ENCODE measurements at regions of chr1 and their contacts with region 1.

Region 1: GRCh38 chr1:155084722-155085503 is 6.3 kb downstream of the EFNA3 start:
- DNase-seq: peak; percentile 94
- H3K4me3 Mint-ChIP-seq: peak overlapping the region; percentile 92
- H3K27ac Mint-ChIP-seq: peak overlapping the region; percentile 84
- H3K4me1 Mint-ChIP-seq: peaks cover 35% of the 10 kb centered on the region
- H3K27me3 Mint-ChIP-seq: peaks cover 31% of the 10 kb centered on the region

Region 2: GRCh38 chr1:154936555-154937084 is 148.3 kb before region 1 on chr1 and contains the start of gene PMVK:
- CTCF ChIA-PET with region 1: interaction called, 16 read pairs
- POLR2A ChIA-PET with region 1: interaction called, 3 read pairs
- intact Hi-C with region 1: no loop called
- DNase-seq: peak; percentile 96
- H3K4me3 Mint-ChIP-seq: peak within 1 kb of the TSS; percentile 90
- H3K27ac Mint-ChIP-seq: peak within 1 kb of the TSS; percentile 96
- H3K4me1 Mint-ChIP-seq: peaks cover 55% of the 10 kb centered on the region
- H3K27me3 Mint-ChIP-seq: no peaks in the 10 kb centered on the region
- total RNA-seq, gene PMVK: 51.2 to 54.0 TPM

Region 3: GRCh38 chr1:154974063-154974807 is 110.7 kb before region 1 on chr1 and contains the start of gene CKS1B:
- CTCF ChIA-PET with region 1: interaction called, 3 read pairs
- POLR2A ChIA-PET with region 1: no interaction called
- intact Hi-C with region 1: loop called (anchors 2 kb)
- DNase-seq: peak; percentile 98
- H3K4me3 Mint-ChIP-seq: no peak within 1 kb of the TSS
- H3K27ac Mint-ChIP-seq: no peak within 1 kb of the TSS
- H3K4me1 Mint-ChIP-seq: peaks cover 30% of the 10 kb centered on the region
- H3K27me3 Mint-ChIP-seq: no peaks in the 10 kb centered on the region
- total RNA-seq, gene CKS1B: 197 to 205 TPM

Region 4: DNA sequence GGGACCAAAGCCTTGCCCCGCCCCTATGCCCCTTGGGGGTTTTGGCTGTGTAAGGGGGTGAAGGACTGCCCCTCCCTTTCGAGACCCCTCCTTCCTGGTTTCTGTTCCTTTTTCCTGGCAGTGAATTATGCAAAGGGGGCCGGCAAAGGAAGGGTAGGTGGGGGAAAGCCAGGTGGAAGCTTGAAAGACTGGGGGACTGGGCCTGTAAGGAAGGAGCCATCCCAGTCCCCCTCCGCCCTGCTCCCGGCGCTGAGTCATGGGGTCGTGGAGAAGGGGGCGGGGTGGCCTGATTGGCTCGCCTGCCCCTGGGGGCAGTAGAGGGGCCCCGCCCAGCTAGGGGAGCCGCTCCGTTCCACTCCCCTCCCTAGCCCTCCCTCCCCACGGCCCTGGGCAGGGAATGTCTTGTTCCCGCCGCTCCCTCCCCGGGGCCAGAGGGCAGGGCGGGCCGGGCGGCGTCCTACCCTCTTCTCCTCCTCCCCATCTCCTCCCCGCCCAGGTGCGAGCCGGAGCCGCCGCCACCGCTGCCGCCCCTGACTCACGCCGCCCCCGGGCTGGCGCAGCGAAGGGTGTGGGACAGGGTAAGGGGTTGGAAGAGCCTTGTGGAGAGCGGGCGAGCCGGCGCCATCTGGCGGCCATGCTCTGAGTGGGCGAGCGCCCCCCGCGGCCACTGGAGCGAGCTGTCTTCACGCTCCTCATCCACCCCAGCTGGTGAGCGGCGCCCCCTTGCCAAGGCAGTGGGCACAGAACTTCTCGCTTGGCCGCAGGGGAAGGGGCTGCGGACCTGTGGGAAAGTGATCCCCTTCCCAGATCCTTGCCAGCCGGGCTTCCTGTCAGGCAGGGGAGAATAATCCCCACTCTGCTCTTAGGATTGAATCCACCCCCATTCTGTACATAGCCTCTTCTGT is 67.6 kb before region 1 on chr1:
- CTCF ChIA-PET with region 1: interaction called, 20 read pairs
- POLR2A ChIA-PET with region 1: no interaction called
- intact Hi-C with region 1: no loop called
- DNase-seq: peak; percentile 97
- H3K4me3 Mint-ChIP-seq: peak overlapping the region; percentile 37
- H3K27ac Mint-ChIP-seq: peak overlapping the region; percentile 78
- H3K4me1 Mint-ChIP-seq: peaks cover 63% of the 10 kb centered on the region
- H3K27me3 Mint-ChIP-seq: no peaks in the 10 kb centered on the region

Region 5: GRCh38 chr1:155063550-155064110 is 21.3 kb before region 1 on chr1 and contains the start of gene EFNA4:
- CTCF ChIA-PET with region 1: interaction called, 125 read pairs
- POLR2A ChIA-PET with region 1: interaction called, 21 read pairs
- intact Hi-C with region 1: loop called (anchors 1 kb)
- DNase-seq: peak; percentile 89
- H3K4me3 Mint-ChIP-seq: peak within 1 kb of the TSS; percentile 80
- H3K27ac Mint-ChIP-seq: peak within 1 kb of the TSS; percentile 31
- H3K4me1 Mint-ChIP-seq: peaks cover 29% of the 10 kb centered on the region
- H3K27me3 Mint-ChIP-seq: no peaks in the 10 kb centered on the region
- total RNA-seq, gene EFNA4: 5.0 to 6.1 TPM

Region 6: GRCh38 chr1:155135415-155136028 is 50.6 kb after region 1 on chr1 and contains the start of gene SLC50A1:
- CTCF ChIA-PET with region 1: interaction called, 10 read pairs
- POLR2A ChIA-PET with region 1: interaction called, 3 read pairs
- intact Hi-C with region 1: loop called (anchors 2 kb)
- DNase-seq: peak; percentile 96
- H3K4me3 Mint-ChIP-seq: peak within 1 kb of the TSS; percentile 91
- H3K27ac Mint-ChIP-seq: peak within 1 kb of the TSS; percentile 94
- H3K4me1 Mint-ChIP-seq: peaks cover 35% of the 10 kb centered on the region
- H3K27me3 Mint-ChIP-seq: no peaks in the 10 kb centered on the region
- total RNA-seq, gene SLC50A1: 60.1 TPM

Region 7: DNA sequence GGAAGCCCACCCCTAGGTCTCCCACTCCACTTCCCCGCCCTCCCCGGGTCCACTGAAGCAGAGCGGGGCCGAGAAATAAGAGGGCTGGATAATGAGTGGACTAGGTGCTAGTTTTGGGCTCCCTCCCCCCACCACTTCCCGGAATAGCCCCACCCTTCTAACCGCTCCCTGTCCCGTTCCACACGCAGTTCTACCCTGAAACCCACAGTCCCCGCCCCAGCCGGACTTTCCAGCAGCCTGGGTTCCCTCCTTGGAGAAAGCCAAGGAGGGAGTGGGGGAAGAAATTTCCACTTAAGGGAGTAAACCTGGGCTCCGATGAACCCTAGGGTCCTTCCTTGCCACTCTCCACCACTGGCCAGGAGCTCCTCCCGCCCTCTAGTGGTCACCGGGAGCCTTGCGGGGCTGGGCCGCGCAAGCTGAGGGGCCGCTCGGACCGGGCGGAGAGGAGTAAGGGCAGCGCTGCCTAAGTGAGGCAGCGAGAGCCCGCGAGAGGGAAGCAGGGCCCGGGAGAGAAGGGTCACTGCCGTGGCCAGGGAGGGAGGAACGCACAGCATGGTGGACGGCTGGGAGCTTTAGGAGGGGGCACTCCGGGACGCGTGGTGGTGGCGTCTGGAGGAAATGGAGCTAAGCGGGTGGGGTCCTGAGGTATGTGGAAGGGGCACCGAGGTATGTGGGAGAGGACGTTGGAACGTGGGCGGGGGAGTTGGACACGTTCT is 108.5 kb after region 1 on chr1:
- CTCF ChIA-PET with region 1: interaction called, 22 read pairs
- POLR2A ChIA-PET with region 1: no interaction called
- intact Hi-C with region 1: no loop called
- DNase-seq: peak; percentile 87
- H3K4me3 Mint-ChIP-seq: peak overlapping the region; percentile 86
- H3K27ac Mint-ChIP-seq: peak overlapping the region; percentile 96
- H3K4me1 Mint-ChIP-seq: peaks cover 25% of the 10 kb centered on the region
- H3K27me3 Mint-ChIP-seq: no peaks in the 10 kb centered on the region

Region 8: GRCh38 chr1:155218854-155219591 is 134.1 kb after region 1 on chr1:
- CTCF ChIA-PET with region 1: no interaction called
- POLR2A ChIA-PET with region 1: no interaction called
- intact Hi-C with region 1: no loop called
- DNase-seq: peak; percentile 30
- H3K4me3 Mint-ChIP-seq: peak overlapping the region; percentile 9
- H3K27ac Mint-ChIP-seq: no peak overlapping the region
- H3K4me1 Mint-ChIP-seq: peaks cover 18% of the 10 kb centered on the region
- H3K27me3 Mint-ChIP-seq: no peaks in the 10 kb centered on the region